Right ventricle myocardium inferior (tissue), 1 donor: ENCODE measurements at regions of chr4 and their contacts with region 1.

Region 1: GRCh38 chr4:64533637-64534036 is 124.4 kb upstream of the TECRL start:
- DNase-seq: no peak
- ATAC-seq: no peak

Region 2: DNA sequence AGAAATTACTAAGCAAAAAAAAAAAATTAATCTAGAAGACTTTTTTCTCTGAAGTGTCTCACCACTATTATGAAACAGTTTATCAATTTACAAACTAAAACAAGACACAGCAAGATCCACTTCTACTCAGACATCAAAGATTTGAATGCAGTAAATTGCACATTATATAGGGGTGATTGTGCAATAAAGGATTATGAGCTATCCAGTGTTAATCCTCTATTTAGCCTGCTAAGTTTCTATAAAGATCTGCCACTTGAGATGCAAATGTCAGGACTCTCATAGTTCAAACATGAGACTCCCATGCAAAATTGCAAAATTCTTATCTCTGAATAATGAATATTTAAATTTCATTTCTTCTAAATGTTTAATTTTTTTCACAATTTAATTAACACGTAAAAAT is 126.6 kb before region 1 on chr4:
- intact Hi-C with region 1: loop called (anchors 2 kb)
- DNase-seq: no peak
- ATAC-seq: no peak

Region 3: GRCh38 chr4:64497491-64497890 is 36.1 kb before region 1 on chr4:
- intact Hi-C with region 1: no loop called
- DNase-seq: no peak
- ATAC-seq: no peak